ENCODE measurements at regions of chr4 and their contacts with region 1.

Region 1: DNA sequence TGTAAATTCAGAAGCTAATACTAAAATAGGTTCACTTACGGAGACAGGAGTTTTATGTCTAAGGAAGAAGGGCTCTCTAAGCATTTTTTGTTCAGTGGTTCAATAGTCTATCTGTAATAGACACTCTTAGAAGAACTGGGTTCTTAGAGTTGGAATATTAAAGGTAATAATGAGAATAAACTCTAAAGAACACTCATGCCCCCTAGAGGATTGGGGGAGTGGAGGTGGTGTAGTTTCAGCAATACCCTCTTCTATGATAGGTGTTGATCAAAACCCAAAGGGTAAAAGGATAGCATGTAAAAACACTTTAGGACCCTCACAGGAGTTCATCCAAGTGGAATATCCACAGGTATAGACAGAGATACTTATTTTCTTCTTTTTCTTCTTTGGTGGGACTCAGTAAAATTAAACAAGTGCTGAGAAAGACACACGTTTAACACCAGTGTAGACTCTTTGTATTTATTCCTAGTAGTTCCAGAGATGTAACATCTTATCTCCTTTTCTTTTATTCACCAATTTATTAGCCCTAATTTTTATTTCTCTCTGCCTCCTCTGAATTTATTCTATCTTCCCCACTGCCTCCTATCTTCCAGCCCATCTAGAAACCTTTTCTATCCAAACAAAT is 25.7 kb upstream of the MND1 start:
- DNase-seq: no peak
- ATAC-seq: peak; percentile 70

Region 2: DNA sequence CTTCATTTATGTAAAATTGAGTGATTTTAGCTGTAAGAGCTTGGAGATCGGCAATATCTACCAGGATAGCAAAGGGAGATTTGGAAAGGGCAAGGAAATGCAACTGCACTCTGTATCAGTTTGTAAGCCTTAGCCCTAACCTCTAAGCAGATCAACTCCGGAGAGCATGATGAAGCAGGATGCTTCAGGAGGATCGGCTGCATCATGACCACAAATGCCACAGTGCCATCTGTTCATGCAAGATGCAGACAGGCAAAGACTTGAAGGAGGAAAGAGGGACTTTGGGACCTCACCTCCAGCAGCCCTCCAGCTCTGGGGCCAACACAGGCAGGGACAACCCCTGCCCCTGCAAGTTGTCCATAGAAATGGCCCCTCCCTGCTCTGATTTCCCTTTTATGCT is 1180.4 kb before region 1 on chr4:
- intact Hi-C with region 1: no loop called
- DNase-seq: no peak
- ATAC-seq: no peak

Region 3: DNA sequence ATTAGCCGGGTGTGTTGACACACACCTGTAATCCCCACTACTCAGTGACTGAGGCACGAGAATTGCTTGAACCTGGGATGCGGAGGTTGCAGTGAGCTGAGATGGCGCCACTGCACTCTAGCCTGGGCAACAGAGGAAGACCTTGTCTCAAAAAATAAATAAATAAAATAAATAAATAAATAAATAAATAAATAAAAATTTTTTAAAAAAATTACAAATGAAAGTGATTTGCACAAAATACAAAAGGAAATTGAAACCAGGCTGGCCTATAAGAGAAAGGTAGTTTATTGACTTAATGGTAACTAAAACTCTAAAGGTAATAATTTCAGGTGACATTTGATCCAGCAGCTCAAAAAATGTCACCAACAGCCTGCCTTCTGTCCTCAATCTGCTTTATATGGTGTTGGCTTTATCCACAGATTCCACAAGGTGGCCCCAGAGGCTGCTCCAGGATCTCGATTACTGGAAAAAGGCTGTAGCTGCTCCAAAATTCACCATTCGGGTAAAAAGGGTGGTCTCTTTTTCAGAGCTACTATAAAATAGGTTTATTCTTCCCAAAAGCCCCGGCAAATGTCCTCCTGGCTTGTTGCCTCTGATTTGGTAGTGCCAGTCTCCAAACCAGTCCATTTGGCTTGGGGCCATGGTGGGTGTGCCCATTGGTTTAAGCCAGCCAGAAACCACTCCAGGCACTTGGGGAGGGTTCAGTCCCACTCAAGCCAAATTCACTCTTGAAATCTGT is 175.9 kb before region 1 on chr4:
- intact Hi-C with region 1: loop called in 1 of 2 experiments (anchors 5 kb)
- DNase-seq: peak; percentile 79 to 91
- ATAC-seq: peak; percentile 78

Region 4: DNA sequence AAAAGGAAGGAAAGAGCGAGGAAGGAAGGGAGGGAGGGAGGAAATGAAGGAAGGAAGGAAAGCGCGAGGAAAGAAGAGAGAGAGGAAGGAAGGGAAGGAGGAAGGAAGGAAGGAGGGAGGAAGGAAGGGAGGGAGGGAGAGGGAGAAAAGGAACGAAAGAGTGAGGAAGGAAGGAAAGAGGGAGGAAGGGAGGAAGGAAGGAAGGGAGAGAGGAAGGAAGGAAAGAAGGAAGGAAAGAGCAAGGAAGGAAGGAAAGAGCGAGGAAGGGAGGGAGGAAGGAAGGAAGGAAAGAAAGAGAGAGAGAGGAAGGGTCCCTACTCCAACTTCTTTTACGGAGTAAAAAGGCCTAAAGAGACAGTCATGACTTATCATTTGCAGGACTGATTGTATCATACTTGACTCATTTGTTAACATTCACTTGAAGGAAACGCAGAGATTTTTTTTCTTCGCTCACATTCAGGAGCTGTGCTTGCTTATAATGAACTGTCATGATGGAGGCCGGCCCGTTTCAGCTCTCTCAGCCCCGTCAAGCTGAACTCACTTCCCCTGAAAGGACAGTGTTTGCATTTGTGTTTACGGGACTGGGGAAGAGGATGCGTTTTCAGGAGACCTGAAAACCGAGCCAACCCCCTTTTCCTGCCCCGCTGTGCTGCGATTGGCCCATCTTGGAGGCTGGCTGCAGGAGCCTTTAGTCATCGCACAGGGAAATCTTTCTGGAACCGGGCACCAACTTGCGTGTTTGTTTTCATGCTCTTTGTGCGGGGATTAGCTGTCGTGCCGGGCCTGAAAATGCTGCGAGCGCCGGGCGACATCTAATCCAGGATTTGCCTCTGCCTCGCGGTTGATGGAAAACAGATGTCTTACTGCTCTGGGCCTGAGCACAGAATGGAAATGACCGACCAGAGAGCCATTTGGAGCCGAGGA is 96.8 kb before region 1 on chr4:
- intact Hi-C with region 1: loop called in 1 of 2 experiments (anchors 10 kb)
- DNase-seq: peak in 1 of 2 donors; percentile 63
- ATAC-seq: peak; percentile 22

Region 5: DNA sequence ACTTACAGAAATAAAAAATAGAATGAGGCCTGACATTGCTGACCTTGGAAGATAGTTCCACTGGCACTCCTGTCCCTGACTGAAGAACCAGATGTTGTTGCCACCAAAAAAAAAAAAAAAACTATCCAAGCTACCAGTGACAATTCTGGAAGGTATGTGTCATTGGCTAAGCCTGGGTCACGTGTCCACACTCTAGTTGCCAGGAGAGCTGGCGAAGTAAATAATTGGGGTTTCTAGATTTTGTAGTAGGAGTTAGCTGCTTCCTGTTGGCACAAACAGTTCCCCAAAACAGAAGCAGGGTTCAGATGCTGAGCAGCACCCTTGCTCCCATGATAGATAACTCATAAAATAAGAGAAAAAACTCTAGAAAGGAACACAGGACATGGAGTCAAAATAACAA is 46.2 kb after region 1 on chr4:
- intact Hi-C with region 1: no loop called
- DNase-seq: no peak
- ATAC-seq: no peak

Region 6: DNA sequence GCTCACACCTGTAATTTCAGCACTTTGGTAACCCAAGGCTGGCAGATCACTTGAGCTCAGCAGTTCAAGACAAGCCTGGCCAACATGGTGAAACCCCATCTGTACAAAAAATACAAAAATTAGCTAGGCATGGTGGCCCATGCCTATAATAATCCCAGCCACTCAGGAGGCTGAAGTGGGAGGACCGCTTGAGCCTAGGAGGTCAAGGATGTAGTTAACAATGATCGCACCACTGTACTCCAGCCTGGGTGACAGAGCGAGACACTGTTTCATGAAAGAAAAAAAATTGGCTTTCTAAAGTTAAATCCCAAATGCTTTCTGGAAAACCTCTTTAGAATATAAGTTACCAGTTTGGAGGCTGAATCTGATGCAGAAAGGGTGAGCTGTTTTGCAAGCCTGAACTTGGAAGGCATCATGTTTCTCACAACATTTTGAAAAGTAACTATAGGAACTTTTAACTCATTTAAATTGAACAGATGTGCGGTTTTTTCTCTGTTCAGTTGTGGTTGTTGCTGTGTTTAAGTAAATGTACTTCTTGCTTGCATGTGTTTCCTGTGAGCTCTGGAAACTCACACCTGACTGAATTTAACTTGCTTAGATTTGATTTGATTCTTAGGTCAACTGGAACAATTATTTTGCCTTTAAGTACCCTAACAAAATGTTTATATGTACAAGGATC is 107.5 kb after region 1 on chr4:
- intact Hi-C with region 1: no loop called
- DNase-seq: no peak
- ATAC-seq: no peak

Measured in left colon (tissue), 2 donors.